IMR-90 (cell line): ENCODE measurements at regions of chr6 and their contacts with region 1.

Region 1: GRCh38 chr6:44237813-44238433 is 9.0 kb upstream of the HSP90AB1 start:
- DNase-seq: peak; percentile 56
- ATAC-seq: peak; percentile 85
- H3K4me3 ChIP-seq: peak overlapping the region; percentile 58
- H3K27ac ChIP-seq: peak overlapping the region; percentile 63
- H3K4me1 ChIP-seq: peaks cover 16% of the 10 kb centered on the region
- H3K27me3 ChIP-seq: no peaks in the 10 kb centered on the region
- CTCF ChIP-seq: peak; percentile 92
- POLR2A ChIP-seq: no peak; the same call in 1 of the 2 replicates
- RAD21 ChIP-seq: peak; percentile 42

Region 2: GRCh38 chr6:44104481-44105021 is 133.4 kb before region 1 on chr6:
- CTCF ChIA-PET with region 1: no interaction called
- POLR2A ChIA-PET with region 1: no interaction called
- dilution Hi-C with region 1: no loop called
- in situ Hi-C with region 1: loop called (anchors 5 kb)
- intact Hi-C with region 1: no loop called
- DNase-seq: no peak
- ATAC-seq: no peak
- H3K4me3 ChIP-seq: no peak overlapping the region
- H3K27ac ChIP-seq: no peak overlapping the region
- H3K4me1 ChIP-seq: peaks cover 14% of the 10 kb centered on the region
- H3K27me3 ChIP-seq: no peaks in the 10 kb centered on the region
- CTCF ChIP-seq: no peak
- POLR2A ChIP-seq: no peak
- RAD21 ChIP-seq: no peak

Region 3: DNA sequence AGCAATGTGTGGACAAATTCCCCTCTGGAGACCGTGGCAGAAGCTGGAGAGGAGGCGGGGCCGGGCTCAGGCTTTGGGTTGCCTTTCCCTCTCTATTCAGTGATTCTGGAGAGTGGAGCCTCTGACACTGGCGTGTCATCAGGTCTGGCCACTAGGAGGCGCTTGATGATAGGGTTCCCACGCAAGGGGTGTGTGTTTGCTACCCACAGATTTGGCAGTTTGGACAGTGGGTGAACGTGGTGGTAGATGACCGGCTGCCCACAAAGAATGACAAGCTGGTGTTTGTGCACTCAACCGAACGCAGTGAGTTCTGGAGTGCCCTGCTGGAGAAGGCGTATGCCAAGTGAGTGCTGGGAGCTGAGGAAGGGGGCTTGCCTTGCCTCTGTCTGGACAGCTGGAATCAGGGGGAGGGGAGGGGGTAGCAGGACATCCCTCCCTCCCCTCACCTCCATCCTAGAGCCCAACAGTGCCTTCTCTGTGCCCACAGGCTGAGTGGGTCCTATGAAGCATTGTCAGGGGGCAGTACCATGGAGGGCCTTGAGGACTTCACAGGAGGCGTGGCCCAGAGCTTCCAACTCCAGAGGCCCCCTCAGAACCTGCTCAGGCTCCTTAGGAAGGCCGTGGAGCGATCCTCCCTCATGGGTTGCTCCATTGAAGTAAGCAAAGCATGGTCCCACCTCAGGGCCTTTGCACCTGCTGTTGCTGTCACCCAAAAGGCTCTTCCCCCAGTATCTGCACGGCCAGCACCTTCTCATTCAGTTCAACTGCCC is 65.0 kb before region 1 on chr6:
- CTCF ChIA-PET with region 1: interaction called, 12 read pairs
- POLR2A ChIA-PET with region 1: no interaction called
- dilution Hi-C with region 1: no loop called
- in situ Hi-C with region 1: loop called (anchors 5 kb)
- intact Hi-C with region 1: loop called (anchors 1 kb)
- DNase-seq: peak; percentile 65
- ATAC-seq: peak; percentile 99
- H3K4me3 ChIP-seq: no peak overlapping the region
- H3K27ac ChIP-seq: no peak overlapping the region
- H3K4me1 ChIP-seq: 0 out of 2 replicates have a peak, but pooled peaks cover 2% of the 10 kb centered on the region
- H3K27me3 ChIP-seq: peaks cover 21% of the 10 kb centered on the region
- CTCF ChIP-seq: peak; percentile 91
- POLR2A ChIP-seq: no peak
- RAD21 ChIP-seq: peak; percentile 89

Region 4: GRCh38 chr6:44221291-44221960 is 16.5 kb before region 1 on chr6:
- CTCF ChIA-PET with region 1: interaction called, 20 read pairs
- POLR2A ChIA-PET with region 1: no interaction called
- dilution Hi-C with region 1: no loop called
- in situ Hi-C with region 1: no loop called
- intact Hi-C with region 1: no loop called
- DNase-seq: peak; percentile 62
- ATAC-seq: peak; percentile 55
- H3K4me3 ChIP-seq: no peak overlapping the region
- H3K27ac ChIP-seq: no peak overlapping the region
- H3K4me1 ChIP-seq: peaks cover 16% of the 10 kb centered on the region
- H3K27me3 ChIP-seq: peaks cover 7% of the 10 kb centered on the region; the same call in 1 of the 2 replicates
- CTCF ChIP-seq: peak; percentile 72
- POLR2A ChIP-seq: no peak
- RAD21 ChIP-seq: peak; percentile 47